ENCODE measurements at regions of chr19 and their contacts with region 1.

Region 1: DNA sequence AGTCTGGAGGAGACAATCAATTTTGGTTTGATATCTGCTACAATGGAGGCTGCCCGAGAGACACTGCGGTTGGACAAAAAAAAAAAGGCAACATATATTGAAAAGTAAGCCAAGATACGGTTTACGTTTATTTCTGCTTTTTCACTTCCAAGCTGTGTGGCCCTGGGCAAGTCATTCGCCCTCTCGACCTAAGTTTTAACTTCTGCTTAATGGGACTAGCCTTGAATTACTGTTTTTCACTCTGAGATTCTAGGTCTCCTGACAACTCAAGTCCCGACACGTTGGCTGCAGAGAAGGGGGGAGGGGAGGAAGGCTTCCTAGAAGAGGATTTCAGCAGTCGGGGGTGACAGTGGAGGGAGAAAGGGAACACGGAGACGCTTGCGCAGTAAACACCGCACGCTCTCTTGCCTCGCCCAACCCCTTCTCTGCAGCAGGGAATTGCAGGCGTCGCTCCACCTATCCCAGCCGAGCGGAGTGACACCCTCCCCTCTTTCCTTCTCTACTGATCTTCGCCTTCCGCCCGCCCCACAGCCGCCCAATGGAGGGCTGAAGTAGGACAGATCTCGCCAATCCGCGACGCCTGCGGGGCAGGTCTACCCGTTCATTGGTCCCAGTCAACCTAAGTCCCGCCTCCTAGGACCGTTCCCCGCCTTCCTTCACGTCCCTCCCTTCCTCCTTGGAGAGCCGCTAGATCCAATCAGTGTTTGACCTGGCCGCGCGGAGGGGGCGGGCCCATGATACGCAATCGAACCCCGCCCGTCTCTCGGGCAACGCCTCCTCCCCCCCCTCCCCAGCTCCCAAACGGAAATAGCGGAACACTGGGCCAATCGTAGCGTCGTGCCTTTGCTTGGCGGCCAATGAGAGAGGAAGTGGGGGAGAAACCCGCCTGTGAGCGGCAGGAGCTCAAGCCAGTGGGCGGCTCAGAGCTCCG is 529 bp upstream of the AP2A1 start:
- DNase-seq: peak; percentile 100
- H3K4me3 Mint-ChIP-seq: peak overlapping the region; percentile 90
- H3K27ac Mint-ChIP-seq: peak overlapping the region; percentile 99
- H3K4me1 Mint-ChIP-seq: peaks cover 19% of the 10 kb centered on the region
- H3K27me3 Mint-ChIP-seq: no peaks in the 10 kb centered on the region
- CTCF ChIP-seq: no peak

Region 2: GRCh38 chr19:49817964-49818648 is 51.8 kb after region 1 on chr19 and contains the start of gene MED25:
- CTCF ChIA-PET with region 1: interaction called, 6 read pairs
- POLR2A ChIA-PET with region 1: interaction called, 36 read pairs
- intact Hi-C with region 1: loop called (anchors 1 kb)
- DNase-seq: peak; percentile 84
- H3K4me3 Mint-ChIP-seq: peak within 1 kb of the TSS; percentile 97
- H3K27ac Mint-ChIP-seq: peak within 1 kb of the TSS; percentile 100
- H3K4me1 Mint-ChIP-seq: peaks cover 16% of the 10 kb centered on the region
- H3K27me3 Mint-ChIP-seq: no peaks in the 10 kb centered on the region
- CTCF ChIP-seq: peak; percentile 26
- total RNA-seq, gene MED25: 39.9 and 43.2 TPM in 2 replicates

Region 3: DNA sequence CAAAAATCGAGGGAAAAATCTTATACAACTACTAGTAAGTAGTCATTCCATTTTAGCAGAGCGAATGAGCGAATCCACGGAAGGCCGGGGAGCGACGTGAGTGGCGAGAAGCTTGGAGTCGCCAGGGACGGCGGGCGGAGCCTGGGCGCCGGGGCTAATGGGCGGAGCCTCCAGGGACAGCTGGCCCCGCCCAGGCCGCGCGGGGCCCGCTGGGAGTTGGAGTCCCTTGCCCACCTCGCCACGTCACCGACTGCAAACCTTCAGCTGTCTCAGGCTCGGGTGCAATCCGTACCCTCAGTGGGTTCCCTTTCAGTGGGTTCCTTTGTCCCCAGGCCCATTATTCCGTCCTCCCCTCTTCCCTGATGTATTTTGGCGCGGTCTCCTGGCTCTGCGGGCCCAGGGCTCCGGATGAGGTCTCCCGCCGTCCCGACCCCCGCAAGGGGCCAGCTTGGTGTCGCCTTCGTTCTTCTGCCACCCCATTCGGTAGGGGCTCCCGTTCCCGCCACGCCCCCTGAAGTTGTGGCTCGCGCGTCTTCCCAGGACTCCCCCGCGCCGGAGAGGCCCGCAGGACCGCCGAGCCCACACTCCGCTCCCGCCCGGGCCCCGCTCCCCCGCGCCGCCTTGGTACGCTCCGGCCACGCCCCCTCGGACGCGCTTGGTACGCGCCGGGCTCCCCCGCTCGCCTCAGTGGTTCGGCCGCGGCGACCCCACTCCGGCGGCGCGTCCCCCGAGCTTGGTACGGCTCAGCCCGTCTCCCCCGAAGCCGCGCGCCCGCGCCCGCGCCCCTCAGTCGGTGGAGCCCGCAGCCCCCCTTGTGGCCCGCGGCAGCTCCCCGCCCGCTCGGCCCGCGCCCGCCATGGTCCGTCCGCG is 84.4 kb after region 1 on chr19 and contains the start of gene PTOV1:
- CTCF ChIA-PET with region 1: no interaction called
- POLR2A ChIA-PET with region 1: interaction called, 20 read pairs
- intact Hi-C with region 1: loop called (anchors 5 kb)
- DNase-seq: peak; percentile 93
- H3K4me3 Mint-ChIP-seq: peak within 1 kb of the TSS; percentile 84
- H3K27ac Mint-ChIP-seq: peak within 1 kb of the TSS; percentile 89
- H3K4me1 Mint-ChIP-seq: peaks cover 32% of the 10 kb centered on the region
- H3K27me3 Mint-ChIP-seq: no peaks in the 10 kb centered on the region
- CTCF ChIP-seq: no peak
- total RNA-seq, gene PTOV1: 68.5 and 78.8 TPM in 2 replicates

Region 4: DNA sequence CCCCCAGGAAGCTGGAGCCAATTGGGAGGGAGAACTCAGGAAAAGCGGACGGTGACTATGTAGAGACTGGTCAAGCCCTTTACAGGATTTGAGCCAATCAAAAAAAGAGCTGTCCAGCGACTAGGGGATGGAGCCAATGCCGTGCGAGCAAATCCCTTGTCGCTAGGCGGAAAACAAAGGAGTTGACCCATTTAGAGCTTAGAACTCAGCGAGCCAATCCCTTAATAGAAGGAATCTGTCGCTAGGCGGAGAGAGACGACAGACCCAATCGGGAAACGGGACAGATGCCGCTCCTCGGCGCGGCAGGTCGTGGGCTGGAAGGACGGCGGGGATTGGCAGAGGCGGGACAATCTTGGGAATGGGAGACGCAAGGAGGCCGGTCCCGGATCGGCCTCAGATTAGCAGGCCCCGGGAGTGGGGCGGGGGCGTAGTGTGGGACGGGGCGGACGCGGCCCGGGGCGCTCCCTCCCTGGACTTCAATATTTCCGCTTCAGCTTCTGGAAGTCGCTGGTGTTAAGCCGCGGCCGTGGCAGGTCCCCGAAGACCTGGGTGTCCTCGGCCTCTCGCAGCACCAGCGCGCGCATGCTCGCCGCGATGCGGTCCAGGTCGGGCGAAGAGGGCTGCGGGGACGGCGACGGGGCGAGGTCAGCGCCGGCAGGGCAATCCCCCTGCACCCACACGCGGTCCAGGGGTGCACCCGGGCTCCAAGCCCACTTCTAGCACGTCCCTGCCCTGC is 103.3 kb after region 1 on chr19:
- CTCF ChIA-PET with region 1: no interaction called
- POLR2A ChIA-PET with region 1: interaction called, 13 read pairs
- intact Hi-C with region 1: loop called (anchors 2 kb)
- DNase-seq: peak; percentile 100
- H3K4me3 Mint-ChIP-seq: no peak overlapping the region
- H3K27ac Mint-ChIP-seq: no peak overlapping the region
- H3K4me1 Mint-ChIP-seq: peaks cover 5% of the 10 kb centered on the region
- H3K27me3 Mint-ChIP-seq: no peaks in the 10 kb centered on the region
- CTCF ChIP-seq: no peak

Region 5: DNA sequence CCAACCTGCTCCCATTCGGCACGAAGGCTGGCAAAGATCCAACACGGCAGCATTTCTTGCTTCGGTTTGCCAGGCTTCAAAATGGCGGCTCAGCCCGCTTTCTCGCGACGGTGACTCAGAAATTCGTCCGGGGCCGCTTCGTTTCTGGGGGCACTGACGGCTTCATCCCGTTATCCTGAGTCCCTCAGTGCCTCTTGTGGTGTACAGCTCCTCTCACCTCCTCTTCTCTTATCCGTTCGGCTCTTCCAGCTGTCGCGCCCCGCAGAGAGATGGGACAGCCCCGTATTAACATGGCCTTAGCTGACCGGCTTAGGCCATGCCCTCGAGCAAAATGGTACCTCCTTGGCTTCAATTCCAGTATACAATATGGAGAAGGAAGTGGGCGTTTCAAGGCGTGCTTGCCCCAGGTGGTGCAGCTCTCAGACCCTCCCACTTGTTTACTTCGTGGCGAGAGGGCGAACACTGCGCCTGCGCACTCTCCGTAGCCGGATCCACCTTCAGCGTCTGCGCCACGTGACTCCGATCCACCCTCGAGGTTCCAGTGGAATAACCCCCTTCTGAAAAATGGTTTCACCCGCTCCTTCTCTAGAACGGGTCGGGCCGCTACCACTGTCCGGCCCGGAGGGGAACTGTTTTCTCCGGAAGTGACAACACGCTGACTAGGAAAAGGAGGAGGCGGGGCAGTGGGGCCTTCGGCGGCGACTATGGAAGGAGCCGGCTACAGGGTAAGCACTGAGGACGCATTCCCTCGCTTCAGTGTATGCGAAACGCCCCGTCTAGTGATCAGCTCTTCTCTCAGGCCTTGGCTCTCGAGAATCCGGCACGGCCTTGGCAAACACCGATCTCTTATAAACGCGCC is 111.0 kb after region 1 on chr19 and contains the starts of genes AKT1S1 and TBC1D17:
- CTCF ChIA-PET with region 1: no interaction called
- POLR2A ChIA-PET with region 1: interaction called, 22 read pairs
- intact Hi-C with region 1: no loop called
- DNase-seq: peak; percentile 100
- H3K4me3 Mint-ChIP-seq: no peak within 1 kb of the TSS
- H3K27ac Mint-ChIP-seq: no peak within 1 kb of the TSS
- H3K4me1 Mint-ChIP-seq: peaks cover 10% of the 10 kb centered on the region
- H3K27me3 Mint-ChIP-seq: no peaks in the 10 kb centered on the region
- CTCF ChIP-seq: no peak
- total RNA-seq, gene AKT1S1: 74.7 and 79.2 TPM in 2 replicates
- total RNA-seq, gene TBC1D17: 25.2 and 25.5 TPM in 2 replicates

Region 6: GRCh38 chr19:49929611-49930482 is 163.6 kb after region 1 on chr19:
- CTCF ChIA-PET with region 1: no interaction called
- POLR2A ChIA-PET with region 1: no interaction called
- intact Hi-C with region 1: loop called (anchors 2 kb)
- DNase-seq: peak; percentile 98
- H3K4me3 Mint-ChIP-seq: peak overlapping the region; percentile 85
- H3K27ac Mint-ChIP-seq: peak overlapping the region; percentile 90
- H3K4me1 Mint-ChIP-seq: peaks cover 16% of the 10 kb centered on the region
- H3K27me3 Mint-ChIP-seq: no peaks in the 10 kb centered on the region
- CTCF ChIP-seq: no peak